Ascending aorta (tissue), 2 donors: ENCODE measurements at regions of chr11 and their contacts with region 1.

Region 1: DNA sequence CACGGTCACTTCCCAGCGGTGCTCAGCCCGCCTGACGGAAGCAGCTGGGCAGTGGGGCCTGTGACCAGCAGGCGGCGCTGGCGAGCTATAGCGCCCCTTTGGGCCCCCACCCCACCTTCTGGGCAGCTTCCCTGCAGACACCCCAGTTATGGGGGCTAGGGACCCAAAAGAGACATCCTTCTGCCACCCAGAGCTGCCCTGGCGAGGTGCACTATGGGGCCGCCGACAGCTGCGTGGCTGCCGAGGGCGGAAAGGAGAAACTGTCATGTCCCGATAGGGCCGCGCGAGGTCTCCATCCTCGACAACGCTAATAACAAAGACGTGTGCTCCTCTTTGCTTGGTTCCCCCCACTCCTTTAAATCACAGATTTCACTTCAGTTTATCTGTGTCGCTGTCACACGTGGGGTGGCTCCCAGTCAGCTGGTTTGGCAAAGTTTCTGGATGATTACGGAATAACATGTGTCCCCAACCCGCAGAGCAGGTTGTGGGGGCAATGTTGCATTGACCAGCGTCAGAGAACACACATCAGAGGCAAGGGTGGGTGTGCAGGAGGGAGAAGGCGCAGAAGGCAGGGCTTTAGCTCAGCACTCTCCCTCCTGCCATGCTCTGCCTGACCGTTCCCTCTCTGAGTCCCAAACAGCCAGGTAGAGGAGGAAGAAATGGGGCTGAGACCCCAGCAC is 674 bp upstream of the MYO7A start:
- DNase-seq: no peak
- H3K4me3 ChIP-seq: peak overlapping the region; percentile 48 to 71
- H3K27ac ChIP-seq: no peak overlapping the region
- H3K4me1 ChIP-seq: peaks cover 11 to 20% of the 10 kb centered on the region in 2 donors
- H3K27me3 ChIP-seq: no peaks in the 10 kb centered on the region
- CTCF ChIP-seq: peak; percentile 92 to 100 (median 98)

Region 2: DNA sequence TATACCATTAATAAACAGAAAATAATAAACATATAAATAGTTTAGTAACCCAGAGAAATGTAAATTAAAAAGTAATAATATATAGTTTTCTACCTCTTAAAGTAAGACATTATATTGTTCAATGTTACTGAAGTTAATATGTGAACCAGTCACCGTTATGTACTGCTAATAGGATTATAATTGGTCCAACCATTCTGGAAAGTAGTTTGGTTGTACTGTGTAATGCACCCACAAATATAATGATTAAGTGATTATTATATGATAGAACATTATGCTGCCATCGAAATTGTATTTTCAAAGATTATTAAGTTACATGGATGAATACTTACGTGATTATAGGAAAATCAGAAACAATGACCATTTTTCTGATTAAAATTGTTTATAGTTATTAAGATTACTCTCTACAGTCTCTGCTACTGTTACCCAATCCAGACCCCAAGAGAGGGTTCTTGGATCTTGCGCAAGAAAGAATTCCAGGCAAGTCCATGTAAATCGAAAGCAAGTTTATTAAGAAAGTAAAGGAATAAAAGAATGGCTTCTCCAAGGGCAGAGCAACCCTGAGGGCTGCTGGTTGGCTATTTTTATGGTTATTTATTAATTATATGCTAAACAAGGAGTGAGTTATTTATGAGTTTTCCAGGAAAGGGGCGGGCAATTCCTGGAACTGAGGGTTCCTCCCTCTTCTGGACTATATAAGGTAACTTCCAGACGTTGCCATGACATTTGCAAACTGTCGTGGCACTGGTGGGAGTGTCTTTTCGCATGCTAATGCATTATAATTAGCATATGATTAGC is 216.6 kb before region 1 on chr11:
- intact Hi-C with region 1: no loop called
- DNase-seq: no peak
- H3K4me3 ChIP-seq: no peak overlapping the region
- H3K27ac ChIP-seq: no peak overlapping the region
- H3K4me1 ChIP-seq: no peaks in the 10 kb centered on the region
- H3K27me3 ChIP-seq: no peaks in the 10 kb centered on the region
- CTCF ChIP-seq: no peak

Region 3: GRCh38 chr11:77082838-77083562 is 44.4 kb before region 1 on chr11:
- intact Hi-C with region 1: no loop called
- DNase-seq: peak; percentile 26 to 81
- H3K4me3 ChIP-seq: no peak overlapping the region
- H3K27ac ChIP-seq: peak overlapping the region; percentile 1 to 53
- H3K4me1 ChIP-seq: peaks cover 4 to 9% of the 10 kb centered on the region in 2 donors
- H3K27me3 ChIP-seq: no peaks in the 10 kb centered on the region
- CTCF ChIP-seq: no peak

Region 4: GRCh38 chr11:77187776-77188632 is 60.6 kb after region 1 on chr11:
- intact Hi-C with region 1: loop called (anchors 1 kb)
- DNase-seq: peak in 1 of 2 donors; percentile 83
- H3K4me3 ChIP-seq: no peak overlapping the region
- H3K27ac ChIP-seq: no peak overlapping the region
- H3K4me1 ChIP-seq: no peaks in the 10 kb centered on the region
- H3K27me3 ChIP-seq: no peaks in the 10 kb centered on the region
- CTCF ChIP-seq: peak; percentile 79 to 91 (median 81)

Region 5: DNA sequence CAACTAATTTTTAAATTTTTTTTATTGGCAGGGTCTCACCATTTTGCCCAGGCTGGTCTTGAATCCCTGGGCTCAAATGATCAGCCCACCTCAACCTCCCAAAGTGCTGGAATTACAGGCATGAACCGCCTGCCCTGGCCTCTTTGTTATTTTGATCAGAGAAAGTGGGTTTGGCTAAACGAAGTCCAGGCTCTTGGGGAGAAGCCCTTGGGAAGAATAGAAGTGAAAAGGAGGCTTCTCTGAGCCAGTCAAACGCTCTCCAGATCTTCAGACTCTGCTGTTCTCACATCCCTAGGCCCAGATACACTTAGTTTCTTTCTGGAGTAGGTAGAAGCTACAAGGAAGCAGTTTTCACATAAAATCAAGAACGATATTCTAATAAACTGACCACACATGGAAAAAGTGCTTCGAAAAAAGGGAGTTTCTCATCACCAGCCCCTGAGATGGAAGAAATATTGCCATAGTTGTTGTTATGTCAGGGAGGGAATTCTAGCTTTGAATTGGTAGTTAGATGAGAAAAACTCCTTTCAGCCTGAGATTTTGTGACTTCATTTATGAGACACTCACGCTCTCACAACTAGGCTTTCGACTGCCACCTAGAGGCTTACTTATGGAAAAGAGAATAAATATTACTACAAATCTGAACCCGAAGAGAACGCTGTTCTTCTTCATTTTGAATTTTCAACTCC is 420.6 kb after region 1 on chr11:
- intact Hi-C with region 1: loop called (anchors 2 kb)
- DNase-seq: no peak
- H3K4me3 ChIP-seq: no peak overlapping the region
- H3K27ac ChIP-seq: no peak overlapping the region
- H3K4me1 ChIP-seq: no peaks in the 10 kb centered on the region
- H3K27me3 ChIP-seq: no peaks in the 10 kb centered on the region
- CTCF ChIP-seq: peak; percentile 30 to 67 (median 31)